ENCODE measurements at regions of chr3 and their contacts with region 1.

Region 1: GRCh38 chr3:128584412-128585020 is 66.1 kb downstream of the RPN1 start:
- DNase-seq: peak; percentile 76 to 90
- H3K4me3 ChIP-seq: no peak overlapping the region
- H3K27ac ChIP-seq: no peak overlapping the region
- H3K4me1 ChIP-seq: peaks cover 25% of the 10 kb centered on the region
- H3K27me3 ChIP-seq: no peaks in the 10 kb centered on the region
- CTCF ChIP-seq: peak; percentile 89

Region 2: DNA sequence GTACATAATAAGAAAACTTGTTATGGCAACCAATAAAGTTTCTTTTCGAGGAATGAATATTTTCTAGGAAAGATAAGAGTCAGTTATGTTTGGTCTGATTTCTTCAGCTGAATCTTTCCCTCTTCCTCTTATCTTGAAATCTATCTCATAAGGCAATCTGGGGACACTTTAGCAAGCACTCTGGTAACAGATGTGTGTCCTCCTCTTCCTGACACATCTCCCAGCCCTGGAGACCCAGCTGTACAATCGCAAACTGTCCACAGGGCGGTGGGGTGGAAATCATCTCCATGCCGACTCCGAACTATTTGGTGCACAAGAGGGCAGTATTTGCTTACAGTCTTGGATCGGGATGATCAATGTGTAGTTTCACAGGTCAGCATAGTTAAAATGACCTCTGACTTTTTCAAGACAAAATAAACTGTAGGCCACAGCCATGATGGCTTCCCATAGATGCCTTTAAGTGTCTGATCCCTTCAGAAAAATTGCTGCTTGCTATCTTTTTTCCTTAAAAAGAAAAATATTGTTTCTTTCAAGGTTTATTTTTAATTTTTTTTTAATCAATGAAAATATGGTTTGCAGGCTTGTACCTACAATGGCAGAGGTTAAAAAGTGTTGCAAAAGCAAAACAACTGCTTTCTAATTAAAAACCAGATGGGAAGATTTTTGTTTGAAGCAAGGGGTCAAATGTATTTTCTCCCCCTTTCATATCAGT is 413.6 kb before region 1 on chr3:
- CTCF ChIA-PET with region 1: interaction called, 6 read pairs
- POLR2A ChIA-PET with region 1: no interaction called
- intact Hi-C with region 1: loop called (anchors 1 kb)
- DNase-seq: peak; percentile 69 to 71
- H3K4me3 ChIP-seq: no peak overlapping the region
- H3K27ac ChIP-seq: no peak overlapping the region
- H3K4me1 ChIP-seq: peaks cover 21% of the 10 kb centered on the region
- H3K27me3 ChIP-seq: no peaks in the 10 kb centered on the region
- CTCF ChIP-seq: peak; percentile 78

Region 3: GRCh38 chr3:128307029-128307633 is 277.4 kb before region 1 on chr3:
- CTCF ChIA-PET with region 1: no interaction called
- POLR2A ChIA-PET with region 1: no interaction called
- intact Hi-C with region 1: loop called (anchors 1 kb)
- DNase-seq: no peak
- H3K4me3 ChIP-seq: no peak overlapping the region
- H3K27ac ChIP-seq: no peak overlapping the region
- H3K4me1 ChIP-seq: no peaks in the 10 kb centered on the region
- H3K27me3 ChIP-seq: no peaks in the 10 kb centered on the region
- CTCF ChIP-seq: peak; percentile 32; the same call in 1 of the 2 replicates

Region 4: DNA sequence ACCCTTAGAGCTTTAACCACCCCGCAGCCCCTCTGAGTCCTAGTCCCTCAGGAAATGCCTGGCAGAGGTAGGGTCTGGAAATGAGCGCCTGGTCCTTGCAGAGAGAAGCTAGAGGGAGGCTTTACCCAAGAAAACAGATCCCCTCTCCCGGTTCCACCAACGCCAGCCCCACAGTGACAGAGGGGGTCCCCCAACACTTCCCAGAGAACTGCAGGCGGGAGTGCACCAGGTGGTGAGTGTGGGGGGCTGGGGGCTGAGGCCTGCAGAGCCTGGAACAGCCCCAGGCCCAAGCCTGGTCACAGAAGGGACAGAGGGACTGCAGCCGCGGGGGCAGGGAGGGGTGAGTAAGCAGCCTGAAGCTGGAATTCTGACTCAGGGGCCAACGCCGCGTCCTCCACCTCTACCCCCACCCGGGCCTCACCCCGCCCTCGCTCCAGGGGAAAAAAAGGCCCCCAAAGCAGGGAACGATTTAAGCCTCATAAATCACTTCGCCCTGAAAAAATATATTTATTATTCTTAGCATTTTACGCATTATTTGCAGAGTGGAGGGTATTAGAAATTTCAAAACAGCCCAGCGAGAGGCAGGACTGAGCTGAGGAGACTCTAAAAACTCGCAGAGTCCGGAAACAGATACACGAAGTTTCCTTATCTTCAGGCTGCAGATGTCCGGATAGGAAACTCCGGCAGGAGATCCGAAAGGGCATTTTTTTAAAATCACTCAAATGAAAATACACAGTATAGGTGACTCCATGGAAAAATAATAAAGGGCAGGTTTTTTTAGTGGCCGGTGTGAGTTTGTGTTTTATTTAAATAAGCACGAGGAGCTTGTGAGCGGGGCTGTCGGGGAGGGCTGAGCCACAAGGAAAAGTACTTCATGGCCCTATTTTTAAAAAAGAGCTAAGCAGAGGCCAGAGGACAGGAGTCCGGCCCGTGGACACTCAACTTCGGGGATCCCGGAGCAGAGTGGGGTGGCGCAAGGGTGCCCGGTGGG is 101.6 kb before region 1 on chr3:
- CTCF ChIA-PET with region 1: no interaction called
- POLR2A ChIA-PET with region 1: no interaction called
- intact Hi-C with region 1: loop called (anchors 1 kb)
- DNase-seq: peak; percentile 73 to 83
- H3K4me3 ChIP-seq: peak overlapping the region; percentile 47
- H3K27ac ChIP-seq: peak overlapping the region; percentile 47
- H3K4me1 ChIP-seq: peaks cover 44% of the 10 kb centered on the region
- H3K27me3 ChIP-seq: no peaks in the 10 kb centered on the region
- CTCF ChIP-seq: no peak

Region 5: DNA sequence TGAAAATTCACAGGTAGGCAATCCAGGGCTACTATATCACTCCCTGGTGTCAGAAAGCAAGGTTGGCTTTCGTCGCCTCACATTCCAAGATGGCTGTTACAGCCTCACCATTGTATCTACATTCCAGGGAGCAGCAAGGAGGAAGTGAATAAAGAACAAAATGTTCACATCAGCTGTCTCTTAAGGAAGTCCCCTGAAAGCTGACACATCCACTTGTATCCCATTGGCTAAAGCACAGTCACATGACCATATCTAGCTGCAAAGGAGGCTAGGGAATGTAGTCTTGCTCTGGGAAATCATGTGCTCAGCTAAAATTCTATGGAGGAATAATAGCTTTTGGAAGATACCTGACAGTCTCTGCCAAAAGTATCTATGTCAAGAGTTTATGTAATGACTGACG is 78.7 kb before region 1 on chr3:
- CTCF ChIA-PET with region 1: interaction called, 9 read pairs
- POLR2A ChIA-PET with region 1: no interaction called
- intact Hi-C with region 1: loop called (anchors 1 kb)
- DNase-seq: no peak
- H3K4me3 ChIP-seq: no peak overlapping the region
- H3K27ac ChIP-seq: no peak overlapping the region
- H3K4me1 ChIP-seq: peaks cover 19% of the 10 kb centered on the region
- H3K27me3 ChIP-seq: no peaks in the 10 kb centered on the region
- CTCF ChIP-seq: no peak

Region 6: GRCh38 chr3:128537121-128537703 is 47.3 kb before region 1 on chr3:
- CTCF ChIA-PET with region 1: no interaction called
- POLR2A ChIA-PET with region 1: no interaction called
- intact Hi-C with region 1: no loop called
- DNase-seq: peak; percentile 46 to 77
- H3K4me3 ChIP-seq: no peak overlapping the region
- H3K27ac ChIP-seq: peak overlapping the region; percentile 45
- H3K4me1 ChIP-seq: peaks cover 16% of the 10 kb centered on the region
- H3K27me3 ChIP-seq: 0 out of 2 replicates have a peak, but pooled peaks cover 8% of the 10 kb centered on the region
- CTCF ChIP-seq: no peak

Region 7: GRCh38 chr3:128598884-128599664 is 14.6 kb after region 1 on chr3:
- CTCF ChIA-PET with region 1: no interaction called
- POLR2A ChIA-PET with region 1: no interaction called
- intact Hi-C with region 1: no loop called
- DNase-seq: no peak
- H3K4me3 ChIP-seq: no peak overlapping the region
- H3K27ac ChIP-seq: no peak overlapping the region
- H3K4me1 ChIP-seq: no peaks in the 10 kb centered on the region
- H3K27me3 ChIP-seq: no peaks in the 10 kb centered on the region
- CTCF ChIP-seq: no peak